GM12878 (cell line): ENCODE measurements at regions of chr5 and their contacts with region 1.

Region 1: DNA sequence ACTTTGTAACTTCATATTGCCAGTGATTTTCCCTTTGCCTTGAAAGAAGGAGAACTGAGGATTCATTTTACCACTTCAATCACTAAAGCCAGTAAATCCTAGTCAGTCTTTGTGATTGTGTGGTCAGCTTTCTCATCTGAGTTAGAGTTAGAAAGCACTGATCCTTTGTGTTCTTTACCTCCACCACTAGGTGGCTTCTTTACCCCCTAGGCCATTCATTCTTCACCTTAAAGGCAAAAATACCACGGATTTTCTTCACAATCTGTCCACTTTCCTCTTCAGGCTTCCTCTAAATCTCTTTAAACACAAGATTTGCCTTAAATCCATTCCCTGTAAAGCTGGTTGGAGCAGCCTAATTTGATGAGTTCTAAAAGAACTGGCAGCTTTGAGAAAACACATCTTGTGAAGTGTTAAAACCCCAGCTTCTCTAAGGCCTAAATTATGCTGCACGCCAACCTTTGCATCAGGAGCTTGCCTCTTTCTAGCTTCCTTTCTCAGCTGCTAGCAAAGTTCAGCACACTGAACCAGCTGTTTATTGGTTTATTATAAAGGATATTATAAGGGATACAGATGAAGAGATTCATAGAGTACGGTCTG is 20.4 kb downstream of the BDP1 start:
- DNase-seq: no peak
- ATAC-seq: peak; percentile 91
- H3K4me3 ChIP-seq: no peak overlapping the region
- H3K27ac ChIP-seq: no peak overlapping the region
- H3K4me1 ChIP-seq: no peaks in the 10 kb centered on the region
- H3K27me3 ChIP-seq: no peaks in the 10 kb centered on the region
- CTCF ChIP-seq: peak; percentile 53 to 72 (median 65)
- EP300 ChIP-seq: no peak
- POLR2A ChIP-seq: no peak
- RAD21 ChIP-seq: peak; percentile 40

Region 2: GRCh38 chr5:71461360-71461759 is 14.5 kb before region 1 on chr5:
- CTCF ChIA-PET with region 1: interaction called, 14 read pairs
- POLR2A ChIA-PET with region 1: interaction called, 3 read pairs
- RAD21 ChIA-PET with region 1: interaction called, 3 read pairs
- SMC1A ChIA-PET with region 1: interaction called, 3 read pairs
- in situ Hi-C with region 1: no loop called
- intact Hi-C with region 1: no loop called
- DNase-seq: no peak
- ATAC-seq: no peak
- H3K4me3 ChIP-seq: no peak overlapping the region
- H3K27ac ChIP-seq: no peak overlapping the region
- H3K4me1 ChIP-seq: no peaks in the 10 kb centered on the region
- H3K27me3 ChIP-seq: no peaks in the 10 kb centered on the region
- CTCF ChIP-seq: no peak
- EP300 ChIP-seq: no peak
- POLR2A ChIP-seq: no peak
- RAD21 ChIP-seq: no peak

Region 3: GRCh38 chr5:71492817-71493615 is 17.1 kb after region 1 on chr5:
- CTCF ChIA-PET with region 1: interaction called, 10 read pairs
- POLR2A ChIA-PET with region 1: no interaction called
- RAD21 ChIA-PET with region 1: no interaction called
- SMC1A ChIA-PET with region 1: interaction called, 3 read pairs
- in situ Hi-C with region 1: no loop called
- intact Hi-C with region 1: no loop called
- DNase-seq: no peak
- ATAC-seq: no peak
- H3K4me3 ChIP-seq: no peak overlapping the region
- H3K27ac ChIP-seq: no peak overlapping the region
- H3K4me1 ChIP-seq: no peaks in the 10 kb centered on the region
- H3K27me3 ChIP-seq: no peaks in the 10 kb centered on the region
- CTCF ChIP-seq: no peak
- EP300 ChIP-seq: no peak
- POLR2A ChIP-seq: no peak
- RAD21 ChIP-seq: no peak